Common myeloid progenitor, CD34-positive (primary cell): ENCODE measurements at regions of chr4 and their contacts with region 1.

Region 1: DNA sequence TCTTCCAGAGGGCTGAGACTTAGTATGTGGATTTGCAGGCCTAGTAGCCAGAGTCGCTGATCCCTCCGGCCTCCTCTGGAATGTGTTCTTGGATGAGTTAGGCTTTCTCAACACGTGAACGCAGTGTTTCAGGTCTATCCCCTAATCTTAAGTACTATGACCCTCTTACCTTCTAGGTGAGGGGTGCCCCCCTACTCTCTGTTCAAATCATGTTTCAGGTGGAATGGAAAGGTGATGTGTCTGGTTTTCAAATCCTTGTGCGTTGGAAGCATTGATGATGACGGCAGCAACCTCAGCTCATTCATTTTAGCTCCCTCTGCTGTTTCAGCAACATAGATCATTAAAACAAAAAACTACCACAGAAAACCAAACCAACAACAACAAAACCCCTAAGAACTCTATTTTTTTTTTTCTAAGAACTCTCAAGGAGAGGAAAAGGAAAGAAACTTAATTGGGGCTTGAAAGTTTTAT is 56.4 kb downstream of the RWDD4 start:
- DNase-seq: peak; percentile 36 to 58 (median 48)
- H3K4me3 ChIP-seq: no peak overlapping the region
- H3K27ac ChIP-seq: no peak overlapping the region
- H3K4me1 ChIP-seq: no peaks in the 10 kb centered on the region
- H3K27me3 ChIP-seq: no peaks in the 10 kb centered on the region

Region 2: GRCh38 chr4:182385897-182386296 is 1216.7 kb before region 1 on chr4:
- CTCF ChIA-PET with region 1: no interaction called
- POLR2A ChIA-PET with region 1: no interaction called
- DNase-seq: no peak
- H3K4me3 ChIP-seq: no peak overlapping the region
- H3K27ac ChIP-seq: no peak overlapping the region
- H3K4me1 ChIP-seq: no peaks in the 10 kb centered on the region
- H3K27me3 ChIP-seq: no peaks in the 10 kb centered on the region

Region 3: GRCh38 chr4:183504064-183504929 is 98.3 kb before region 1 on chr4:
- CTCF ChIA-PET with region 1: interaction called, 11 read pairs
- POLR2A ChIA-PET with region 1: no interaction called
- DNase-seq: peak; percentile 97 to 99 (median 99)
- H3K4me3 ChIP-seq: peak overlapping the region; percentile 79 to 99 (median 95)
- H3K27ac ChIP-seq: peak overlapping the region; percentile 95 to 97
- H3K4me1 ChIP-seq: peaks cover 8 to 45% (median 26%) of the 10 kb centered on the region in 4 experiments
- H3K27me3 ChIP-seq: no peaks in the 10 kb centered on the region

Region 4: DNA sequence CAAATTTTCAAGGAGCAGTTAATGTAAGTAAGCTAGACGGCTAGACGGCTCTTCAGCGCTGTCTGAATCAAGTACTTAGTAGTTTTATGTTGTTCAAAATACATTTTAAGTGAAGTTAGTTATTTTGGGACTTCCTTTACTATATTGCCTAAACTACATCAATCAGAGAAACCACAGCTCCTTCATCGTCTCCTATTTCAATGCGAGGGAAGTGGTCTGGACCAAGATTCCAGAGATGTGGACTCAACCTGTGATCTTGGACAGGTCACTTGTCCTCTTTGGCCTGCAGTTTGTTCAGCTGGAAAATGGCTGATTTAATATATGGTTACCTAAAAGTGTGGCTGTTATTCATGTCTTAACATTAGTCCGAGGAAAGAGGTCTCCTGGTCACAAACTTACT is 87.2 kb before region 1 on chr4:
- CTCF ChIA-PET with region 1: interaction called, 14 read pairs
- POLR2A ChIA-PET with region 1: interaction called, 8 read pairs
- DNase-seq: no peak
- H3K4me3 ChIP-seq: no peak overlapping the region
- H3K27ac ChIP-seq: no peak overlapping the region
- H3K4me1 ChIP-seq: peaks cover 0 to 12% (median 0%) of the 10 kb centered on the region in 4 experiments
- H3K27me3 ChIP-seq: no peaks in the 10 kb centered on the region